ENCODE measurements at regions of chr17 and their contacts with region 1.

Region 1: DNA sequence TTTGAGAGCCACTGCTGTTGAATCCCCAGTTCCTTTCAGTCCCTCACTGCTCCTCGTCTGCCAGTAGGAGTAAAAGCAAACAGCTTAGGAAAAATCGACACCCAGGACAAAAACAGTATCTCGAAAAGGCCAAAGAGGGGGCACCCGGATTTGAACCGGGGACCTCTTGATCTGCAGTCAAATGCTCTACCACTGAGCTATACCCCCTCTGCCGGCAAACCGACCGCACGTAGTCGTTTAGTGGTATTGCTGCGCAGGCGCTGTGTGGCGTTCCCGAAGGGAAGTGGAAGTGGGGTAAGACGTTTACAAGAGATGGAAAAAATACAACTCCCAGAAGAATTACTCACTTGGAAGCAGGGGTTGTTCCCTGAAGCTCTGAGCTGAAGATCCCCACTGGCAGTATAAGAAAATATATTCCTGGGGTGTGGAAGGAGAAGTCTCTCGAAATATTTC is 2.2 kb upstream of the PLXDC1 start:
- DNase-seq: peak; percentile 94 to 99
- H3K4me3 ChIP-seq: peak overlapping the region; percentile 90
- CTCF ChIP-seq: no peak
- POLR2A ChIP-seq: no peak

Region 2: DNA sequence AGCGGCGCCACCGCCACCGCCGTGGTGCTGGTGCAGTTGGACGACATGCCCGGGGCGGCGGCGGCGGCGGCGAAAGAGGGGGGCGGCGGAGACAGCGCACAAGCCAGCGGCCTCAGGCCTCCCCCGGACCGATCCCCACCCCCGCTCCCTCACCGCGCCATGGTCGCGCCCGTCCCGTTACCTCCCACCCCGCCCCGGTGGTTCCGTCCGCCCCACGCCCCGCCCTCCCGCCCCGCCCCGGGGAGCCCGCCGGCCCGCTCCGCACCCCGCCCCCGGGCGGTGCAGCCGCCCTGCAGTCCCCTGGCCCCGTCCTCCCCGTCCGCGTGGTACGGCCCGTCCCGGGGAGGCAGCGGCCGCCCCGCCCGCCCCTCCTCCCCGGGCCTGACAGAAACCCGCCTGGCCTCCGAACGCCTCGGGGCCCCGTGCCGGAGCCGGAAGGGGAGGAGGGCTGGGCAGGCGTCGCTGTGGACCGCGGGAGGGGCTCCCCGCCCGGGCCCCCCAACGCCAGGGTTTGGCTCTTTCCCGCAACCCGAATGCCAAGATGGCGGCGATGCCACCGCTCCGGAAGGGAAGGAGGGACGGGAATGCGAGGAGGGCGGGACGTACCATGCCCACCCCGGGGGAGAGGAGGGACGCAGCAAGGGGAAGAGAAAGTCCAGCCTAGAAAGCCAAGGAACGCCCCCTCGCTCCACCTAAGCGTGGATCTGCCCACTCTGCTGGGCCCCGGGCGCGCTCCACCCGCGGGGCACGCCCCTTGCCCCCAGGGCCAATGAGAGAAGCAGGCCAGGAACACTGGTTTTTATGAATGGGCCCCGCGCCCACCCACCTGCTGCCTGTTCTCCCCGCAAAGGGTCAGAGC is 354.0 kb before region 1 on chr17 and contains the start of gene PIP4K2B:
- intact Hi-C with region 1: loop called (anchors 10 kb)
- DNase-seq: peak; percentile 92 to 98
- H3K4me3 ChIP-seq: peak within 1 kb of the TSS; percentile 58
- CTCF ChIP-seq: no peak
- POLR2A ChIP-seq: no peak
- total RNA-seq, gene PIP4K2B: 19.5 to 45.4 (median 33.6) TPM

Region 3: GRCh38 chr17:38853292-38854219 is 300.1 kb before region 1 on chr17 and contains the start of gene RPL23:
- intact Hi-C with region 1: no loop called
- DNase-seq: peak; percentile 97 to 98
- H3K4me3 ChIP-seq: peak within 1 kb of the TSS; percentile 69
- CTCF ChIP-seq: no peak
- POLR2A ChIP-seq: peak in 1 of 2 donors; percentile 36
- total RNA-seq, gene RPL23: 1,475 to 2,290 (median 1,639) TPM

Region 4: DNA sequence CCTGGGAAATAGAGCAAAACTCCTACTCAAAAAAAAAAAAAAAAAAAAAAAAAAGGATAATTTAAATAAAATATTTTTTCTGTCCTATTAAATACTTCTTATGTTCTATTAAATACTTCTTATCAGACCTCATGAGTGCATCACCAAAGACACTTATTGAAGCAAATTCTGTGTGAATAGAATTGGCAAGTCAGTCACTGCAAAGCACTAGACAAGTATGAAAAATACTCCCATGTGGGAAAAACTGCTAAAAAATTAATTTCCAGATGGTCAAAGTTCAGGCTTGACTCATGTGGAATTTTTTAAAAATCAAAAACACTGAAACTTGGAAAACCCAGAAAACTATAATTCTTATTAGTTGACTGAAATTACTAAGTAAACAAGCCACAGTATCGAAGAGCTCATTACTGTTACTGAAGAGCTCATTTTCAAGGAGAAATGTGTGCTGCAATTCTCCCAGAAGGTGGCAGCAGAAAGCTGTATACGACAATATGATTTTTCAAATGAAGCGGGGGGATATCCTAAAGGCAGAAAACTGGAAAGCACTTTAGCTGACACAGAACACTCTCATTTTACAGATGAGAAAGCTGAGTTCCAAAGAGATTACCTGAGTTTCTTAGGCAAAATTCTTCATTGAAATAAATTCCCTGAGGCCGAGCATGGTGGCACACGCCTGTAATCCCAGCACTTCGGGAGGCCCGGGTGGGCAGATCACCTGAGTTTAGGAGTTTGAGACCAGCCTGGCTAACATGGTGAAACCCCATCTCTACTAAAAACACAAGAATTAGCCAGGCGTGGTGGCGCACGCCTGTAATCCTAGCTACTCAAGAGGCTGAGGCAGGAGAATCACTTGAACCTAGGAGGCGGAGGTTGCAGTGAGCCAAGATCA is 170.5 kb before region 1 on chr17:
- intact Hi-C with region 1: loop called (anchors 10 kb)
- DNase-seq: no peak
- H3K4me3 ChIP-seq: no peak overlapping the region
- CTCF ChIP-seq: peak in 1 of 3 donors; percentile 25
- POLR2A ChIP-seq: no peak

Measured in lower leg skin (tissue), 4 donors.